Heart right ventricle (tissue), 16 donors: ENCODE measurements at regions of chr13 and their contacts with region 1.

Region 1: DNA sequence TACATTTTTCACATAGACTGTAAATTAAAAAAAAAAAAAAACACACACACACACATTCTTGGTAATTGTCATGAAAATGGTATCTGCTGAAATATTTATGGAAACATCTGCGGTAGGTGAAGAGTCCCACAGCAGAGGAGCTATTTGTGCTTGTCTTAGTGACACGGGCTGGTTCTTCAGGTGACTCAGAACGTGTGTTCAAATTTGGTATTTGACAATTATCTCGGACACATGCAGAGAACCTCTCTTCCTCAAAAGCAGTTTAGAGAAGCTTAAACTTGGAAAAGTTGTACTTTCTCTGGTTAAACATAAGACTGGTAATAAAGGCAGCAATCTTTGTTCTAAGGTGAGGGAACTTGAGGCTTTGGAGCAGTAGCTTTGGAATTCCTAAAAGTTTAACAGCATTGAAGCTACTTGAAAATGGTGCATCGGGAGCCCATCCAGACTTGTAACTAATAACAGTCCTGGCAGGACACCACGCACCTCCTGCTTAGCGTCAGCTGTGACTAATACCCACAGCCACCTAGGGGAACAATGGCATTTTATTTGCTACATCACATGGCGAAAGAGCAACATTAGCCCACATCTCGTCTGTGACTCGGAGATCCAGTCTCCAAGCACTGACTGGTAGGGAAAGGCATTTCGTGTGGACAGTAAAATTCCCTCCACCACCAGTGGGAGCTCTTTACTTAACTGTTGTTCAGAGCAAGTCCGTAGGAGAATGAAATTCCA is 1505.1 kb upstream of the SLC10A2 start:
- DNase-seq: peak in 1 of 2 donors; percentile 78
- ATAC-seq: peak; percentile 58 to 92 (median 83)
- H3K4me3 ChIP-seq: peak overlapping the region in 1 of 10 donors; percentile 8
- H3K27ac ChIP-seq: no peak overlapping the region
- H3K4me1 ChIP-seq: peaks cover 0 to 9% (median 0%) of the 10 kb centered on the region in 9 donors
- H3K27me3 ChIP-seq: peaks cover 0 to 3% (median 0%) of the 10 kb centered on the region in 7 donors
- CTCF ChIP-seq: peak; percentile 8 to 82 (median 65)

Region 2: DNA sequence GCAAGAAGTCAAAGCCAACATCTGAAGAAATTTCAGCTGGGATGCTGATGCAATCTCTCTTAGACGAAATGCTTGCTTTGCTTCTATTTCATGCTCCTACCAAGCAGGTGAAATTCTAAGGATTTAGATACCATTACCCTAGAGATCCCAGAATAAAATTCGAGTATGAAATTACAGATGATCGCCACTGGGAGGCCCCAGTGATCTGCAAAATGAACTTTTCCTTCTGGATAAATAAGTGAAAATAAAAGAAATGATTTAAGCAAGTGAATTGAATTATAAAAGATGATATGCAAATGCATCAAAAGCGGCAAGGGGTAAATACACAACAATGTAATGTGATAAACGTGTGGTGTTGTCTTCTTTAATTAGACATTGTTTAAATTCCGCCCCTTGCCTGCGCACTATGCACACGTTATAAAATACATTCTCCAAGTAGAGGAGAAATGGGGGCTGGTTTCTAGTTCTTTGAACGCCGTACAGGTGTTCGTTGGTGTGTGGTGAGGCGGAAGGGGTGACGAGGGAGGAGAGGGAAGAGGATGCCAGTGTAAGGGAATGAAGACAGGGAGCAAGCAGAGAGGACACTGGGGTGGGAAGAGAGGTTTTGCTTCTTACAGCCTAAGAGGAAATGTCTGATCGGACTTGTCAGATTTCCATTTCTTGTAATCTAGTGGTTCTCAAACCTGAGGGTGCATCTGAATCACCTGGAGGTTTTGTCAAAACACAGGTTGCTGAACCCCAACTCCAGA is 1667.5 kb before region 1 on chr13:
- intact Hi-C with region 1: loop called in 1 of 10 experiments (anchors 10 kb)
- DNase-seq: no peak
- ATAC-seq: no peak
- H3K4me3 ChIP-seq: no peak overlapping the region
- H3K27ac ChIP-seq: peak overlapping the region in 2 of 10 donors; percentile 57 to 60
- H3K4me1 ChIP-seq: peaks cover 0 to 17% (median 0%) of the 10 kb centered on the region in 9 donors
- H3K27me3 ChIP-seq: no peaks in the 10 kb centered on the region
- CTCF ChIP-seq: peak in 7 of 9 donors; percentile 27 to 46 (median 36)

Region 3: GRCh38 chr13:104534847-104535246 is 36.5 kb before region 1 on chr13:
- intact Hi-C with region 1: no loop called
- DNase-seq: no peak
- ATAC-seq: no peak
- H3K4me3 ChIP-seq: no peak overlapping the region
- H3K27ac ChIP-seq: no peak overlapping the region
- H3K4me1 ChIP-seq: no peaks in the 10 kb centered on the region
- H3K27me3 ChIP-seq: no peaks in the 10 kb centered on the region
- CTCF ChIP-seq: no peak